ENCODE measurements at regions of chr19 and their contacts with region 1.

Region 1: GRCh38 chr19:21482863-21483276 is 22.5 kb upstream of the ZNF429 start:
- DNase-seq: peak; percentile 41
- ATAC-seq: peak; percentile 82
- H3K4me3 Mint-ChIP-seq: no peak overlapping the region
- H3K27ac Mint-ChIP-seq: no peak overlapping the region
- H3K4me1 Mint-ChIP-seq: no peaks in the 10 kb centered on the region
- H3K27me3 Mint-ChIP-seq: no peaks in the 10 kb centered on the region
- CTCF ChIP-seq: peak; percentile 37

Region 2: GRCh38 chr19:20999731-21000352 is 483.0 kb before region 1 on chr19:
- CTCF ChIA-PET with region 1: no interaction called
- POLR2A ChIA-PET with region 1: no interaction called
- intact Hi-C with region 1: loop called (anchors 5 kb)
- DNase-seq: peak; percentile 74
- ATAC-seq: peak; percentile 100
- H3K4me3 Mint-ChIP-seq: peak overlapping the region; percentile 91
- H3K27ac Mint-ChIP-seq: peak overlapping the region; percentile 70
- H3K4me1 Mint-ChIP-seq: peaks cover 6% of the 10 kb centered on the region
- H3K27me3 Mint-ChIP-seq: no peaks in the 10 kb centered on the region
- CTCF ChIP-seq: no peak

Region 3: DNA sequence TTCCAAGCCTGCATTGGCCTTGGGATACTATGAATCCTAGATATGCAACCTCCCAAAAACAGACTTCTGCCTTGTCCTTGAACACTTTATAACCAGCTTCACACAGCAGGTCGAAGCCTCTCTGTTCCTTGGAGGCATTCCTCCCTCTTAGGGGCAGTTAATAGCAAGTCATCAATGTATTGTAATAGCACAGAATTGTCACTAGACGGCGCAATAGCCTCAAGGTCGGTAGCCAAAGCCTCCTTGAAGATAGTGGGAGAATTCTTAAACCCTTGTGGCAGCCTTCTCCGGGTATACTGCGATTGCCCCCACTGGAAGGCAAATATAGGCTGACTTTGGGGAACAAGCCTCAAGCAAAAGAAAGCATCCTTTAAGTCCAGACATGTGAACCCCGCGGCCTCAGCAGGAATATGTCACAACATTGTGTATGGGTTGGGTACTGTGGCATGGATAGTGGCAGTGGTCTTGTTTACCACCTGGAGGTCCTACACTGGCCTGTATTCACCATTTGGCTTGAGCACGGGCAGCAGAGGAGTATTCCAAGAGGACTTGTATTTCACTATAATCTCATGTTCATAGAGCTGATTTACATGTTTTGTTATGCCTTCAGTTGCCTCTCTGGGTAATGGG is 279.9 kb before region 1 on chr19:
- CTCF ChIA-PET with region 1: no interaction called
- POLR2A ChIA-PET with region 1: no interaction called
- intact Hi-C with region 1: loop called (anchors 1 kb)
- DNase-seq: no peak
- ATAC-seq: peak; percentile 28
- H3K4me3 Mint-ChIP-seq: no peak overlapping the region
- H3K27ac Mint-ChIP-seq: no peak overlapping the region
- H3K4me1 Mint-ChIP-seq: no peaks in the 10 kb centered on the region
- H3K27me3 Mint-ChIP-seq: no peaks in the 10 kb centered on the region
- CTCF ChIP-seq: no peak